A549 (cell line): ENCODE measurements at regions of chr2 and their contacts with region 1.

Region 1: GRCh38 chr2:85888684-85889626 is at the start of gene ST3GAL5:
- DNase-seq: peak; percentile 81 to 92
- ATAC-seq: peak; percentile 74 to 84
- H3K4me3 ChIP-seq: peak within 1 kb of the TSS; percentile 77
- H3K27ac ChIP-seq: peak within 1 kb of the TSS; percentile 88 to 97
- H3K4me1 ChIP-seq: peaks cover 67% of the 10 kb centered on the region
- CTCF ChIP-seq: peak; percentile 97
- EP300 ChIP-seq: peak in 1 of 2 experiments; percentile 28; a peak in 1 of 5 replicates
- POLR2A ChIP-seq: peak; percentile 22
- RAD21 ChIP-seq: peak; percentile 55 to 81
- polyA plus RNA-seq, gene ST3GAL5: 115 and 119 TPM in 2 replicates

Region 2: GRCh38 chr2:85698184-85698879 is 190.6 kb before region 1 on chr2:
- CTCF ChIA-PET with region 1: no interaction called
- POLR2A ChIA-PET with region 1: no interaction called
- DNase-seq: no peak
- ATAC-seq: no peak
- H3K4me3 ChIP-seq: no peak overlapping the region
- H3K27ac ChIP-seq: peak overlapping the region; percentile 12 to 42; a peak in 3 of 6 replicates
- H3K4me1 ChIP-seq: peaks cover 28% of the 10 kb centered on the region
- CTCF ChIP-seq: no peak
- EP300 ChIP-seq: no peak
- POLR2A ChIP-seq: no peak
- RAD21 ChIP-seq: no peak

Region 3: GRCh38 chr2:85797921-85798320 is 91.0 kb before region 1 on chr2:
- CTCF ChIA-PET with region 1: no interaction called
- POLR2A ChIA-PET with region 1: no interaction called
- DNase-seq: peak; percentile 26 to 43
- ATAC-seq: peak in 1 of 2 experiments; percentile 46; a peak in 2 of 6 replicates
- H3K4me3 ChIP-seq: no peak overlapping the region
- H3K27ac ChIP-seq: peak overlapping the region in 1 of 2 experiments; percentile 6; a peak in 2 of 6 replicates
- H3K4me1 ChIP-seq: peaks cover 43% of the 10 kb centered on the region
- CTCF ChIP-seq: peak; percentile 44
- EP300 ChIP-seq: no peak
- POLR2A ChIP-seq: no peak
- RAD21 ChIP-seq: peak; percentile 64 to 75

Region 4: GRCh38 chr2:85826990-85827878 is 61.7 kb before region 1 on chr2:
- CTCF ChIA-PET with region 1: interaction called, 131 read pairs
- POLR2A ChIA-PET with region 1: no interaction called
- DNase-seq: peak; percentile 72 to 88
- ATAC-seq: peak; percentile 95 to 99
- H3K4me3 ChIP-seq: peak overlapping the region; percentile 21; the same call in 1 of the 3 replicates
- H3K27ac ChIP-seq: peak overlapping the region; percentile 74 to 84
- H3K4me1 ChIP-seq: peaks cover 8% of the 10 kb centered on the region
- CTCF ChIP-seq: peak; percentile 96
- EP300 ChIP-seq: no peak
- POLR2A ChIP-seq: no peak
- RAD21 ChIP-seq: peak; percentile 99

Region 5: GRCh38 chr2:85905187-85905666 is 16.3 kb after region 1 on chr2:
- CTCF ChIA-PET with region 1: interaction called, 75 read pairs
- POLR2A ChIA-PET with region 1: no interaction called
- DNase-seq: no peak
- ATAC-seq: no peak
- H3K4me3 ChIP-seq: no peak overlapping the region
- H3K27ac ChIP-seq: peak overlapping the region; percentile 37 to 67; a peak in 5 of 6 replicates
- H3K4me1 ChIP-seq: peaks cover 27% of the 10 kb centered on the region
- CTCF ChIP-seq: no peak
- EP300 ChIP-seq: no peak
- POLR2A ChIP-seq: no peak
- RAD21 ChIP-seq: no peak

Region 6: DNA sequence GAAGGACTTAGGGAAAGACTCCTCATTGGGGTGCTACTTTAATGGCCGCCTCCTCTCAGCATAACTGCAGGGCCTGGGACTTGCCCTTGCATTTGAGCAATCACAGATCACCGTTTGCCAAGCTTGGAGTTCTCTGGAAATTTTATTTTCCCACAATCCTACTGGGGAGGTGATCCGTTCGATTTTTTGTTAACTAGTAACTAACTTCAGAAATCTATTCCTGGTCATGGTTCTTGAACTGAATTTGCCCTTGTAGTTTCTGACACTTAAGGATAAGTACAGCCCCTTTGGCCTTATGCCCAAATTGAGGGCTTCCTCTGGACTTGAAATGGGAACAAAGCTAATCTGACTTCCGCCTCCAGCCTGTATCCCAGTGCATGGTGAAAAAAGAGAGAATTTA is 60.3 kb after region 1 on chr2:
- CTCF ChIA-PET with region 1: interaction called, 30 read pairs
- POLR2A ChIA-PET with region 1: no interaction called
- DNase-seq: no peak
- ATAC-seq: no peak
- H3K4me3 ChIP-seq: no peak overlapping the region
- H3K27ac ChIP-seq: peak overlapping the region in 1 of 2 experiments; percentile 10; a peak in 1 of 6 replicates
- H3K4me1 ChIP-seq: peaks cover 27% of the 10 kb centered on the region
- CTCF ChIP-seq: no peak
- EP300 ChIP-seq: no peak
- POLR2A ChIP-seq: no peak
- RAD21 ChIP-seq: no peak

Region 7: DNA sequence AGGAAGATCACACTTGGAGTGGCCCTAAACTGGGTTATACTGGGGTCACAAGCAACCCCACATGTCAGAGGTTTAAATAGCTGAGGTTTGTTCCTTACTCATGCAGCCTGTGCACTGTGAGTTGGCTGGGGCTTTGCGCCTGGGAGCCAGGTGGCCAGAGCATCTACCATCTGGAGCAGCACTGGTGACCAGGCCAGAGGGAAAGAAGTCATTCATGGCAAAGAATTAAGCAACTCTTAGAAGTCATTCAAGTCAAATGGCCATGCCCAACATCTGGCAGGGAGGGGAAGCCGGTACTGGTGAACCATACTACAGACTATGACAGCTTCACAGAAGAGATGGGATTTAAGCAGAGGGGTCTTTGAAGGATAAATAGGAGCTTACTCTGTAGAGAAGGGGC is 126.1 kb after region 1 on chr2:
- CTCF ChIA-PET with region 1: interaction called, 15 read pairs
- POLR2A ChIA-PET with region 1: interaction called, 3 read pairs
- DNase-seq: no peak
- ATAC-seq: no peak
- H3K4me3 ChIP-seq: no peak overlapping the region
- H3K27ac ChIP-seq: no peak overlapping the region
- H3K4me1 ChIP-seq: peaks cover 16% of the 10 kb centered on the region
- CTCF ChIP-seq: no peak
- EP300 ChIP-seq: no peak
- POLR2A ChIP-seq: no peak
- RAD21 ChIP-seq: no peak

Region 8: GRCh38 chr2:86048888-86049287 is 159.9 kb after region 1 on chr2:
- CTCF ChIA-PET with region 1: interaction called, 36 read pairs
- POLR2A ChIA-PET with region 1: no interaction called
- DNase-seq: no peak
- ATAC-seq: no peak
- H3K4me3 ChIP-seq: no peak overlapping the region
- H3K27ac ChIP-seq: no peak overlapping the region
- H3K4me1 ChIP-seq: no peaks in the 10 kb centered on the region
- CTCF ChIP-seq: no peak
- EP300 ChIP-seq: no peak
- POLR2A ChIP-seq: no peak
- RAD21 ChIP-seq: no peak

Region 9: DNA sequence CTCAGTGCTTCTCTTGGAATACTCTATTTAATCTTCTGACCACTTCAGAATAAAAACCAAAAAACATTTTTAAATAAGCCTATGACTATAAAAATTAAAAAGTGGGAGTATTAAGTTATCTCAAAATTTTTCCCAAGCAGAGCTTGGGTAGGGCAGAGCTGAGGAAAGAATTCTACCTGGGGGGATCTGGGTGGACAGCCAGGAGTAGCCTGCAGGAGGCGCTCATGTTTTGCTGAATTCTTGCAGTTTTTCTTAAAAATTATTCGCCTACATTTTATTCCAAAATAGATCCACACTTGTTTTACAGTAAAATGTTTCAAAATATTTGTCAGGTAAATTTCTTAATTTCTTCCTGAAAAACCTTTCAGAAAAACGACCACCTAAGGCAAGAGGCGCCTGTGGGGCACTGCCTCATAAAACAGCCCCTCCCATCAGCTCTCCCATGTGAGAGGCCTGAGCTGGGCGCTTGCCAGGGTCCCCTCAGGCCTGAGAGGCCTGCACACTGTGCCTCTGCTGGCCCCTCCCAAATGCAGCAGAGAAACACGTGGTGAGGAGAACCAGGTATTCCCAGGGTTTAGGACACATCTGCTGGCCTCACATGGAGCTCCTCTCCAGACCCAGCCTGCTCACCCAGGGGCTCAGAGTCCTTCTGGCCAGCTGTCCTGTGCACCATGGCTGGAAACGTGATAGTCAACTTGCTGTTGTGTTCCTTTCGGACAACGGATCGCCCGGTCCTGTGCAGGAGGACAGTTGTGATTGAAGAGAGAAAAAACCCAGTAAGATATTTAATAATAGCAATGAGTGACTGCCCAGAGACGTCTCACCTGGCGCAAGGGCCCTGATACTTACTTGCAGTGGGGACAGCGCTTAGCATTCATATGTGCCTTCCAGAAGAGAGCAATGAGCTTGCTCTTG is 199.2 kb after region 1 on chr2:
- CTCF ChIA-PET with region 1: interaction called, 238 read pairs
- POLR2A ChIA-PET with region 1: no interaction called
- DNase-seq: peak in 1 of 2 experiments; percentile 43
- ATAC-seq: peak in 1 of 2 experiments; percentile 52; a peak in 2 of 6 replicates
- H3K4me3 ChIP-seq: no peak overlapping the region
- H3K27ac ChIP-seq: no peak overlapping the region
- H3K4me1 ChIP-seq: peaks cover under 1% of the 10 kb centered on the region; the same call in 1 of the 3 replicates
- CTCF ChIP-seq: peak; percentile 60
- EP300 ChIP-seq: no peak
- POLR2A ChIP-seq: no peak
- RAD21 ChIP-seq: 0 out of 5 replicates have a peak, but pooled peaks of 1 of the 2 experiments have one; percentile 13